ENCODE measurements at regions of chr9 and their contacts with region 1.

Region 1: DNA sequence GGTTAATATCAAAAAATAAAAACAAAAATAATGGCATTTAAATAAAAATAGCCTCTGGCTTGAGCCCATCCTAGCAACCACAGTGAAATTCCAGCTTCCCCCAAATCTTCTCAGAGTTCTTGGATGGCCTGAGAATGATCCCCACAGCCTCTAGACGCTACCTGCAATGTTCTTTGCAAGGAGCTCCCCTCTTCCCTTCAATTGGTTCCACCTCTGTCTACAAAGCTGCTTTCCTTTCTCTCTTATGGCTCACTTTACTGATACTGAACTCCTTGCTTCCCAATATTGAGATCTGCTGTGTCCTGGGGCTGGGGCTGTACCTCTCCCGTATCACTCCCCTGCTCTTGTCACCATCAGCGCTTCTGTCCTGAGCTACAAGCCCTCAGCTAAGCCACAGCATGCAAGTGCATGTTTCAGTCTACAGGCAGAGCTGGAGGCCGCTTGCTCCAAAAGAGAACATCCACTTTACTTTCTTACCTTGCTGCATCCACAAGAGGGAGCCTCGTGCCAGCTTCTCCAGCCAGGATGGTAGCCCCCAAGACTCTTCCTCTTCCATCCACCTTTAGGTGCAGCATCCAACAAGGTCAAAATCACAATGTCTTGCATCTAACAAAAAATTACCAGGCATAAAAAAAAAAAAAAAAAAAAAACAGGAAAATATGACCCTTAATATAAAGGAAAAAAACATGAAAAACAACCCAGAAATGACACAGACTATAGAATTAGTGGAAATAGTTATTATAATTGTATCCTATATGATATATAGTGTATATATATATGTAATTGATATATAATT is 57.4 kb upstream of the PRSS3 start:
- DNase-seq: peak; percentile 40
- ATAC-seq: no peak
- H3K4me3 Mint-ChIP-seq: no peak overlapping the region
- H3K27ac Mint-ChIP-seq: no peak overlapping the region
- H3K4me1 Mint-ChIP-seq: no peaks in the 10 kb centered on the region
- H3K27me3 Mint-ChIP-seq: peaks cover 18% of the 10 kb centered on the region

Region 2: GRCh38 chr9:32877639-32878217 is 860.3 kb before region 1 on chr9:
- CTCF ChIA-PET with region 1: no interaction called
- POLR2A ChIA-PET with region 1: no interaction called
- intact Hi-C with region 1: no loop called
- DNase-seq: no peak
- ATAC-seq: no peak
- H3K4me3 Mint-ChIP-seq: no peak overlapping the region
- H3K27ac Mint-ChIP-seq: no peak overlapping the region
- H3K4me1 Mint-ChIP-seq: no peaks in the 10 kb centered on the region
- H3K27me3 Mint-ChIP-seq: no peaks in the 10 kb centered on the region

Region 3: GRCh38 chr9:33778700-33779351 is 40.8 kb after region 1 on chr9:
- CTCF ChIA-PET with region 1: interaction called, 33 read pairs
- POLR2A ChIA-PET with region 1: no interaction called
- intact Hi-C with region 1: loop called (anchors 1 kb)
- DNase-seq: peak; percentile 64
- ATAC-seq: peak; percentile 96
- H3K4me3 Mint-ChIP-seq: no peak overlapping the region
- H3K27ac Mint-ChIP-seq: no peak overlapping the region
- H3K4me1 Mint-ChIP-seq: peaks cover 5% of the 10 kb centered on the region
- H3K27me3 Mint-ChIP-seq: peaks cover 3% of the 10 kb centered on the region

Measured in activated CD4-positive, alpha-beta T cell treated with anti-CD3 and anti-CD28 coated beads for 36 hours (primary cell).